ENCODE measurements at regions of chr2 and their contacts with region 1.

Region 1: GRCh38 chr2:54015798-54016699 is 45.3 kb upstream of the PSME4 start:
- DNase-seq: no peak
- ATAC-seq: no peak
- H3K4me3 ChIP-seq: no peak overlapping the region
- H3K4me3 Mint-ChIP-seq: peak overlapping the region in 3 of 10 donors; percentile 6 to 40 (median 35)
- H3K27ac ChIP-seq: no peak overlapping the region
- H3K27ac Mint-ChIP-seq: peak overlapping the region; percentile 63 to 92 (median 84)
- H3K4me1 ChIP-seq: peaks cover 10 to 25% of the 10 kb centered on the region in 2 donors
- H3K4me1 Mint-ChIP-seq: peaks cover 24 to 52% (median 45%) of the 10 kb centered on the region in 7 donors
- H3K27me3 ChIP-seq: no peaks in the 10 kb centered on the region
- H3K27me3 Mint-ChIP-seq: no peaks in the 10 kb centered on the region

Region 2: DNA sequence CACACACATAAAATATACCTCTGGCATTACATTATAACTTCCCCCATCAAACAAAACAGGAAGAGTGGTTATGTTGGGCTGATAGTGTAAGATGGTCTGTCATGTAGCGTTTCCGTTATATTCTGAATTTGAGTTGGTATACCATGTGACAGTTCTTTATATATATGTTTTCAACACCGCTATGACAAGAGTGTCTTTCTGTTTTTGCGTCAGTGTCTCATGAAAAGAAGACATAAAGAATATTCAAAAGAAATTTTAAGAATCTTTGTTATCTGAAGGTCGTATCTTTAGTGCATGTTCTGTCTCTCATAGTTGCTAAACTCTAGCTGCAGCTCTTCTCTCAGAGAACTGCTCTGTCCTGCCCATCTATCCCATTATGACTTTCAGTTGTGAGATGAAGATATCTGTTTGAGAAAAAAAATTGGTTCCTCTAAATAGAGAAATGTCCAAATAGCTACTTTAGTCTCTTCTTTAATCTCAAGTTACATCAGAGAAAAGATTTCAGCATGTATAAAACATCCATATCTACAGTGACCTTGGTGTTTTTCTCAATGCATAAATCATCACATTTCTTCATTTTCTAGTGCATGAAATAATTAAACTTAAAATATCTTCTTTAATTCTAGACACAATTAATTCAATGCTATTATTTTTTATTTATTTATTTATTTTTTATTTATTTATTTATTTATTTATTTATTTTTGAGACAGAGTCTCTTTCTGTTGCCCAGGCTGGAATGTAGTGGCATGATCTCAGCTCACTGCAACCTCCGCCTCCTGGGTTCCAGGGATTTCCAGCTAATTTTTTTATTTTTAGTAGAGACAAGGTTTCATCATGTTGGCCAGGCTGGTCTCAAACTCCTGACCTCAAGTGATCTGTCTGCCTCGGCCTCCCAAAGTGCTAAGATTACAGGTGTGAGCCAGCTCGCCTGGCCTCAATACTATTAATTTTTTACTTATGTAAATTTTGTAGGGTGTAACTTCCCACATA is 20.9 kb before region 1 on chr2:
- CTCF ChIA-PET with region 1: interaction called, 5 read pairs
- POLR2A ChIA-PET with region 1: interaction called, 20 read pairs
- intact Hi-C with region 1: loop called (anchors 1 to 2 kb)
- DNase-seq: peak in 7 of 9 donors; percentile 71 to 89 (median 86)
- ATAC-seq: peak; percentile 97
- H3K4me3 ChIP-seq: peak overlapping the region; percentile 24
- H3K4me3 Mint-ChIP-seq: peak overlapping the region; percentile 64 to 79 (median 73)
- H3K27ac ChIP-seq: peak overlapping the region; percentile 73
- H3K27ac Mint-ChIP-seq: peak overlapping the region; percentile 83 to 98 (median 91)
- H3K4me1 ChIP-seq: peaks cover 32 to 34% of the 10 kb centered on the region in 2 donors
- H3K4me1 Mint-ChIP-seq: peaks cover 20 to 35% (median 29%) of the 10 kb centered on the region in 7 donors
- H3K27me3 ChIP-seq: no peaks in the 10 kb centered on the region
- H3K27me3 Mint-ChIP-seq: no peaks in the 10 kb centered on the region

Region 3: GRCh38 chr2:54000524-54000923 is 15.5 kb before region 1 on chr2:
- CTCF ChIA-PET with region 1: interaction called, 5 read pairs
- POLR2A ChIA-PET with region 1: interaction called, 20 read pairs
- intact Hi-C with region 1: loop called in 1 of 2 experiments (anchors 2 kb)
- DNase-seq: no peak
- ATAC-seq: no peak
- H3K4me3 ChIP-seq: no peak overlapping the region
- H3K4me3 Mint-ChIP-seq: no peak overlapping the region
- H3K27ac ChIP-seq: no peak overlapping the region
- H3K27ac Mint-ChIP-seq: peak overlapping the region in 2 of 9 donors; percentile 14 to 32
- H3K4me1 ChIP-seq: peaks cover 15 to 17% of the 10 kb centered on the region in 2 donors
- H3K4me1 Mint-ChIP-seq: peaks cover 0 to 8% (median 5%) of the 10 kb centered on the region in 7 donors
- H3K27me3 ChIP-seq: no peaks in the 10 kb centered on the region
- H3K27me3 Mint-ChIP-seq: no peaks in the 10 kb centered on the region